Aorta (tissue), 5 donors: ENCODE measurements at regions of chr16 and their contacts with region 1.

Region 1: DNA sequence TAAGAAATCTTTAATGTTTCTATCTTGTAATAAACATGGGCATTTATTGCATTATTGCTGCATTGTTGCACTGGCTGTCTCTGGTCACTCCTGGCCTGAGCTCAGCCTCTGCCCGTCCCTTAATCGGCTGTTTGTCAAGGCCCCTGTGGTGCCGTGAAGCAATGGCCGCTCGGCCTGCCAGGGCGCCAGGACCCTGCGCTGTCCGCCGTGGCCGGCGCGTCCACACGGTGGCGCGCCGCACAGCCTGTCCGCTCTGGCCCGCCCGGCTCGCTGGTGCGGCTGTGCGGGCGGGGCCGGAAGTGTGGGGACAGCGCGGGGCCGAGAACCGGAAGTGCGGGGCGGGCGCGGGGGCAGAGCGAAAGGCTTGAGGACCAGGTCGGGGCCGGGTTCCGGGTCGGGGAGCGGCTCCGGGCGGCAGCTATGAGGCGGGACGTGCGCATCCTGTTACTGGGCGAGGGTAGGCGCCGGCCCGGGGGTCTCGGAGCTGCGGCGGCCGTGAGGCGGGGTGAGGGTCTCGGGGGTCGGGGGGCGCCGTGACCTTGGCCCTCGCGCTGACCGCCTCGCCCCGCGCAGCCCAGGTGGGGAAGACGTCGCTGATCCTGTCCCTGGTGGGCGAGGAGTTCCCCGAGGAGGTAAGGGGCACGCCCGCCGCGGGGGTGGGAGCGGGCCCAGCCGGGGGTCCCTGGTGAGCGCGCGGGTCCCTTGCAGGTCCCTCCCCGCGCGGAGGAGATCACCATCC is at the start of gene RHOT2:
- DNase-seq: peak; percentile 96 to 98
- ATAC-seq: peak; percentile 94
- H3K4me3 ChIP-seq: peak within 1 kb of the TSS; percentile 11 to 74
- H3K27ac ChIP-seq: no peak within 1 kb of the TSS
- H3K4me1 ChIP-seq: no peaks in the 10 kb centered on the region
- H3K27me3 ChIP-seq: no peaks in the 10 kb centered on the region
- total RNA-seq, gene RHOT2: 79.3 to 93.8 TPM

Region 2: DNA sequence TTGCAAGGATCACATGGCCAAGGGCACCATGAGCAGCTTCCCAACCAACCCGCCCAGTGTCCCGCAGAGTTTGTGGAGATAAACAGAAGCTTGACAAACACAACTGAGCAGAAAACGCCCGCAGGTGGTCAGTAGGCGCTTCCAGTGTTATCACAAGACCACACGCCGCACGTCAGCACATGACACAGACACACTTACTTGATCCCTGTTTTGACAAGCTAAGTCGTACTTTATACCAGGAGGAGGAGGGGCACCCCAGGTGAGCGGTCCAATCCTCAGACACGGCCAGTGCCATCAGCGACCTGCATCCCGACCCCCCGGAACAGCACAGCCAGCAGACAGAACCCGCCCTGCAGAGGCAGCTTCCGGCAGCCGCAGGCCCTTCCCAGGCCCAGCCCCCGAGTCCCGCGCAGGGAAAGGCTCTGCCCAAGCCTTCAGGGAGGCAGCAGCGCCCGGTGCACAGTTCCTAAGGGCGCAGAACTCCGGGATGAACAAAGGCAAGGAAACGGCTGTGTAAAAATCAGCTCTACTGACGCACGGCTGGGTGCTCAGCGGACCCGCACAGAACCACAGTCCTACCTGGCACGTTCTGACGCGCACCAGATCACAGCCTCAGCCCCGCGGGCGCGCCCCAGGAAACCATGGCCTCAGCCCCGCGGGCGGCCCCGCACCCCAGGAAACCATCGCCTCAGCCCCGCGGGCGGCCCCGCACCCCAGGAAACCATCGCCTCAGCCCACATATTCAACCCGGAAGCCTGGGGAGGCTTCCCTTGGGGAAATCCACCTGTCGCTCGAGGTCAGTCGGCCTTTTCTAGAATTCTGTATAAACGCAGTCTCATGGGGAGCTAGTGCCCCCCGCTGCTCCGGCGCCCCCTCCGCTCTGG is 343.3 kb before region 1 on chr16:
- intact Hi-C with region 1: no loop called
- DNase-seq: peak in 1 of 2 donors; percentile 74
- ATAC-seq: no peak
- H3K4me3 ChIP-seq: no peak overlapping the region
- H3K27ac ChIP-seq: no peak overlapping the region
- H3K4me1 ChIP-seq: no peaks in the 10 kb centered on the region
- H3K27me3 ChIP-seq: no peaks in the 10 kb centered on the region

Region 3: DNA sequence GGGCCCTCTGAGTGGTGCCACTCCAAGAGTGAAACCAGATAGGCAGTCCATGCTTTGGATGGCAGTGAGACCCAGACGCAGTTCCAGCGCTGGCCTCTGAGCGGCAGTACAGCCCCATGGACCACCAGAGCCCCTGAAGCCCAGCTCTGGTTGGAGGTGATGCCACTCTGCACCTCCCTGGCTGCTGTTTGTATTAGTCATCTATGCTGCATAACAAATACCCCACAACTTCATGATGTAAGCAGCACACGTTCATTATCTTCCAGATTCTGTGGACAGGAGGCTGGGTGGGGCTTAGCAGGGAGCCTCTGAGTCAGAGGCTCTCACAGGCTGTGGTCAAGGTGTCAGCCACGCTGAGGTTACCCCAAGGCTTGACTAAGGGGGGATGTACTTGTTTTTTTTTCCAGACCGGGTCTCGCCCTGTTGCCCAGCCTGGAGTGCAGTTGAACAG is 276.0 kb before region 1 on chr16:
- intact Hi-C with region 1: loop called in 1 of 2 experiments (anchors 10 kb)
- DNase-seq: no peak
- ATAC-seq: no peak
- H3K4me3 ChIP-seq: no peak overlapping the region
- H3K27ac ChIP-seq: no peak overlapping the region
- H3K4me1 ChIP-seq: no peaks in the 10 kb centered on the region
- H3K27me3 ChIP-seq: no peaks in the 10 kb centered on the region

Region 4: DNA sequence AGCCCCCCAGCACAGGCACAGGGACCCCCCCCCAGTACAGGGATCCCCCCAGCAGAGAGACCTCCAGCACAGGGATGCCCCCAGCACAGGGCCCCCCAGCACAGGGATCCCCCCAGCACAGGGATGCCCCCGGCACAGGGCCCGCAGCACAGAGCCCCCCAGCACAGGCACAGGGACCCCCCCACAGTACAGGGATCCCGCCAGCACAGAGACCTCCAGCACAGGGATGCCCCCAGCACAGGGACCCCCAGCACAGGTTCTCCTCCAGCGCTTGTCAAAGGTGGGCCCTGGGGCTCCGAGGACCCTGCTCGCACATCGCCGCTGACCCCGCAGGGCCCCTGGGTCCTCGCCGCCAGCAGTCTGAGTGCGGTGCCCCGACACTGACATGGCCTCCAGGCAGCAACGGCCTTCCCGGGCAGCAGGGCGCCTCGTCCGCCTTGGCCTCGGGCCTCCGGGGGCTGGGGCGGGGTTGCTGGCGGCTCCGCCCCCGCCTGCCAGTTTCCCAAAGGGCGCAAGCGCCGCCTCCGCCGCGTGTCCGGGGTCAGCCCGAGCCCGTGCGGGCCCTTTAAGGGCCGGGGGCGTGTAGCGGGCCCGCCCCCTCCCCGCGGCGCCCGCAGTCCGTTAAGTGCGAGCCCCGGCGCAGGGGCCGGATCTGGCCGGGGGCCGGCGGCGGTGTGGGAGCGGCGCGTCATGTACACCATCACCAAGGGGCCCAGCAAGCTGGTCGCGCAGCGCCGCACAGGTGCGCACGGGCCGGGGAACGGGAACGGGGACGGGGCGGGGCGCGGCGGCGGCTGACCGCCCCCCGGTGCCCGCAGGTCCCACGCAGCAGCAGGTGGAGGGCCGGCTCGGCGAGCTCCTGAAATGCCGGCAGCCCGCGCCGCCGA is 26.4 kb before region 1 on chr16 and contains the start of gene MCRIP2:
- intact Hi-C with region 1: no loop called
- DNase-seq: peak; percentile 93
- ATAC-seq: peak; percentile 65
- H3K4me3 ChIP-seq: peak within 1 kb of the TSS; percentile 46 to 80
- H3K27ac ChIP-seq: peak within 1 kb of the TSS in 1 of 2 donors; percentile 26
- H3K4me1 ChIP-seq: no peaks in the 10 kb centered on the region
- H3K27me3 ChIP-seq: no peaks in the 10 kb centered on the region
- total RNA-seq, gene MCRIP2: 10.4 to 14.7 TPM

Region 5: DNA sequence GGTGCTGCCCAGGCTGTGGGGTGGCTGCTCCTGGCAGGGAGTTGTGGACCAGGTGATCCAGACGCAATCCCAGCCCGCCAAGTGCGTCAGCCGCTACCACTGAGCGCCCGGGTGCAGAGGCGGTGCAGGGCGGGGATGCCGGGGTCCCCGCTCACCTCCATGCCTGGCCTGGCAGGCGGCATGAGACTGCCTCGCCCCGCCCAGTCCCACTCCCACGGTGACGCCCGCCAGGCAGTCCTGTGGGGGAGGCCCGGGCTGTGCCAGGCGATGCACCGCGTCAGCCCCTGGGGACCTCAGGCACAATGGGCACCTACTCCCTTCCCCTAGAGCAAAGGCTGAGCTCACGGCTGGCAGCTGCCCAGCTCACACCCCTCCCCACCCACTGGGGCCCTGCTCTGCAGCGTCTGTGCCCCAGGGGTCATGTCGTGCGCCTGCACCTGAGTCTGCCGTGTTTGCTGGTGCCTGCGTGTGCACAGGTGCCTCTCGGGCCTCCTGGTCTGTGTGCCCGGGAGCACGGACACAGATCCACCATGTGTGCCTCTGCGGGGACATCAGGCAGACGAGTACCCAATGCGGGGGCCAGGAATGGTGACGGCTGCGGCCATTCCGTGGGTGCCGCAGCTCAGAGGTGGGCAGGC is 114.9 kb after region 1 on chr16:
- intact Hi-C with region 1: no loop called
- DNase-seq: no peak
- ATAC-seq: no peak
- H3K4me3 ChIP-seq: no peak overlapping the region
- H3K27ac ChIP-seq: no peak overlapping the region
- H3K4me1 ChIP-seq: no peaks in the 10 kb centered on the region
- H3K27me3 ChIP-seq: no peaks in the 10 kb centered on the region